K562 (cell line): ENCODE measurements at regions of chr2 and their contacts with region 1.

Region 1: GRCh38 chr2:70381831-70382267 is 80.0 kb upstream of the FAM136A start:
- DNase-seq: no peak
- ATAC-seq: no peak
- H3K4me3 ChIP-seq: no peak overlapping the region
- H3K27ac ChIP-seq: no peak overlapping the region
- H3K4me1 ChIP-seq: no peaks in the 10 kb centered on the region
- H3K27me3 ChIP-seq: peaks cover 2 to 7% of the 10 kb centered on the region in 2 experiments; a peak in 3 of 5 replicates
- CTCF ChIP-seq: no peak
- EP300 ChIP-seq: no peak
- POLR2A ChIP-seq: no peak
- RAD21 ChIP-seq: no peak

Region 2: DNA sequence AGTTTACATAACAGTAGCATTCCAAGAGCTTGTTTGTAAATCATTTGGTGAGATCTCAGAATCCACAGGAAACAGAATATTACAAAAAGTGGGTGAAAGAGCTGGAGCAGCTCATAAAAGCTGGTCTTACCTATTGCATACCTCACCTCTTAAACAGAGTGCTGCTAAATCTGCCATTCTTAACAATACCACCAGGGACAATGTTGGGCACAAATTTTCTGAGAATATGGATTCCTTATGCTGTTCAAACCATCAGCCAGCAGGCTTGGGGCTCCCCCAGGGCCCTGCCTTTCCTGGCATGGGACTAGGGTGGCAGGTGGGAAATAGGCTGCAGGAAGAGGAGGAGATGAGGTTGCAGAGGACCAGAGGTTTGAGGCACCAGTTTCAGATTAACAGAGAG is 116.2 kb after region 1 on chr2:
- CTCF ChIA-PET with region 1: no interaction called
- POLR2A ChIA-PET with region 1: no interaction called
- in situ Hi-C with region 1: no loop called
- intact Hi-C with region 1: loop called (anchors 10 kb)
- DNase-seq: peak in 1 of 4 experiments; percentile 4
- ATAC-seq: peak; percentile 72
- H3K4me3 ChIP-seq: no peak overlapping the region
- H3K27ac ChIP-seq: no peak overlapping the region
- H3K4me1 ChIP-seq: no peaks in the 10 kb centered on the region
- H3K27me3 ChIP-seq: peaks cover 3 to 9% of the 10 kb centered on the region in 2 experiments; a peak in 4 of 5 replicates
- CTCF ChIP-seq: peak; percentile 28 to 41 (median 36); a peak in 3 of 6 replicates
- EP300 ChIP-seq: no peak
- POLR2A ChIP-seq: no peak
- RAD21 ChIP-seq: no peak